Keratinocyte (primary cell): ENCODE measurements at regions of chr20 and their contacts with region 1.

Region 1: GRCh38 chr20:17594443-17594842 is 24.6 kb downstream of the DSTN start:
- DNase-seq: no peak
- H3K4me3 ChIP-seq: no peak overlapping the region
- H3K27ac ChIP-seq: no peak overlapping the region
- H3K4me1 ChIP-seq: peaks cover 22% of the 10 kb centered on the region
- H3K27me3 ChIP-seq: no peaks in the 10 kb centered on the region
- CTCF ChIP-seq: no peak

Region 2: GRCh38 chr20:17495826-17496225 is 98.6 kb before region 1 on chr20:
- dilution Hi-C with region 1: no loop called
- DNase-seq: no peak
- H3K4me3 ChIP-seq: no peak overlapping the region
- H3K27ac ChIP-seq: no peak overlapping the region
- H3K4me1 ChIP-seq: peaks cover 4% of the 10 kb centered on the region
- H3K27me3 ChIP-seq: no peaks in the 10 kb centered on the region
- CTCF ChIP-seq: no peak

Region 3: DNA sequence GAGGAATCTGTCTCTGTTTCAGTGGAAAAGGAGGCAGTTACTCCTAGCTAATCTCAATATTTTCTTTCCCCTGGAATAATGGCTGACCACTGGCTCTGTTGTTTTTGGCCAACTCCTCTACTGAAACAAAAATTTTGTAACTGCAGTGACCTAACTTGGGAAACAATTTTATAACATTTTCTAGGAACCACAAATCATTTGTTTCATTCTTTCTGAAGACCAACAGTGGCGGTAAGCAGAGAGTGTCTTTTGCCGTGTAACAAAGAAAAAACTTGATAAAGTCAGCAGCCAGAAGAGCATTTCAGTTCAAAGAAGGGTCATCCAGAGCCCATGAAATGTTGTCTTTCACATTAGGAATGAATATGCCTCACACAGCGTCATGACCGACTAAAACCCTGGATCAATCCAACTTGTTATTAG is 51.4 kb before region 1 on chr20:
- dilution Hi-C with region 1: loop called (anchors 5 kb)
- DNase-seq: no peak
- H3K4me3 ChIP-seq: no peak overlapping the region
- H3K27ac ChIP-seq: no peak overlapping the region
- H3K4me1 ChIP-seq: no peaks in the 10 kb centered on the region
- H3K27me3 ChIP-seq: no peaks in the 10 kb centered on the region
- CTCF ChIP-seq: no peak

Region 4: DNA sequence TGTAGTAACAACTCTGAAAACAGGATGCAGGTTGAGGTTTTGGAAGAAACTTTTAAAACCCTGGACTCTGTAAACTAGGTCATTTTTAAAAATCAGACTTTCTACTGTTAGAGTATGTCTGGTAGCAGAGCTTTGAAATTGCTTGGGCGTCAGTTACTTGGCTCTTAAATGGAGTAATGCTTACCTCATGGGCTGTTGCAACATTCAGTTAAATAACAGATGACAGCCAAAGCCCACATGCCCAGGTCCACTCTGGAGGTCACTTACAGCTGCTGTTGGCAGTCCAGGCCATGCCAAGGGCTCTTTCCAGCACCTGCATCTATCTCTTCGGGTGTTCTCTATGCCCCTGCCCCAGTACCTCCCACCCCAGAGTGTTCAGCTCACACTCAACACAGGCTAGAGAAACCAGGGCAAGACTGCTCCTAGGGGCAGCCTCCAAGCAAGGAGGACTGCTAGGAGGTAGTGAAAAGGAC is 201.7 kb after region 1 on chr20:
- dilution Hi-C with region 1: no loop called
- DNase-seq: no peak
- H3K4me3 ChIP-seq: no peak overlapping the region
- H3K27ac ChIP-seq: no peak overlapping the region
- H3K4me1 ChIP-seq: no peaks in the 10 kb centered on the region
- H3K27me3 ChIP-seq: peaks cover 7% of the 10 kb centered on the region
- CTCF ChIP-seq: no peak